CD4-positive, alpha-beta memory T cell (primary cell): ENCODE measurements at regions of chr17 and their contacts with region 1.

Region 1: GRCh38 chr17:76408052-76408849 is 23.8 kb downstream of the SPHK1 start:
- DNase-seq: peak; percentile 60 to 68 (median 66)
- H3K4me3 ChIP-seq: no peak overlapping the region
- H3K4me3 Mint-ChIP-seq: no peak overlapping the region
- H3K27ac ChIP-seq: no peak overlapping the region
- H3K27ac Mint-ChIP-seq: peak overlapping the region; percentile 6 to 74 (median 59)
- H3K4me1 ChIP-seq: no peaks in the 10 kb centered on the region
- H3K4me1 Mint-ChIP-seq: peaks cover 4 to 14% (median 9%) of the 10 kb centered on the region in 4 donors
- H3K27me3 ChIP-seq: no peaks in the 10 kb centered on the region
- H3K27me3 Mint-ChIP-seq: no peaks in the 10 kb centered on the region

Region 2: DNA sequence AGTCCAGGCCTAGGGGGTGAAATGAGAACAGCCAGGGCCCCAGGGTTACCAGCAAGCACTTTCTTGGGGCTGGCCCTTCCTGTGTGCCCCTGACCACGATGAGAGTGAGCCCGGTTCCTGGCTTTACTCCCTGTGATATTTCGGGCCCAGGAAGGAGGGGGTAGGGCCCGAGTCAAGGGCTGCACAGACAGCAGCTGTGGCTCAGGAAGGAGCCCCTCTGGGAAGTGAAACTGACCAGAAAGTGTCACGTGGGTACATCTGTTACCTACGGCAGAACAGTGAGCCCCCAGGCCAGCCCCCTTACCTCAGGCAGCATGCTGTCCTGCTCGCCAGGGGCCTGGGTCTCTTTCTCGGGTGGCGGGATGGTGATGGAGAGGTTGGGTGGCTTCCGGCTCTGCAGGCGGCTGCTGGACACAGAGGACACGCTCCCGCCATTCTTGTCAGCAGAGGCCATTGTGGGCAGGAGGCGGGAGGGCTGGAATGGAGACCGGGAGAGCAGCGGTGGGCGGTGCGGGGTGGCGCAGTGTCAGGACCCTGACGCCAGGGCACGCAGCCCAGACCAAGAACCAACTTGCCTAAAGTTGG is 72.9 kb after region 1 on chr17:
- CTCF ChIA-PET with region 1: no interaction called
- POLR2A ChIA-PET with region 1: no interaction called
- intact Hi-C with region 1: no loop called
- DNase-seq: peak in 1 of 5 donors; percentile 22
- H3K4me3 ChIP-seq: no peak overlapping the region
- H3K4me3 Mint-ChIP-seq: no peak overlapping the region
- H3K27ac ChIP-seq: no peak overlapping the region
- H3K27ac Mint-ChIP-seq: no peak overlapping the region
- H3K4me1 ChIP-seq: no peaks in the 10 kb centered on the region
- H3K4me1 Mint-ChIP-seq: peaks cover 0 to 4% (median 1%) of the 10 kb centered on the region in 4 donors
- H3K27me3 ChIP-seq: no peaks in the 10 kb centered on the region
- H3K27me3 Mint-ChIP-seq: no peaks in the 10 kb centered on the region

Region 3: GRCh38 chr17:76501018-76501826 is 93.0 kb after region 1 on chr17 and contains the start of gene RHBDF2:
- CTCF ChIA-PET with region 1: interaction called, 91 read pairs
- POLR2A ChIA-PET with region 1: interaction called, 3 read pairs
- intact Hi-C with region 1: no loop called
- DNase-seq: peak; percentile 92 to 98 (median 95)
- H3K4me3 ChIP-seq: peak within 1 kb of the TSS; percentile 61 to 83
- H3K4me3 Mint-ChIP-seq: peak within 1 kb of the TSS; percentile 86 to 91 (median 89)
- H3K27ac ChIP-seq: peak within 1 kb of the TSS; percentile 69
- H3K27ac Mint-ChIP-seq: peak within 1 kb of the TSS; percentile 85 to 100 (median 98)
- H3K4me1 ChIP-seq: peaks cover 41% of the 10 kb centered on the region
- H3K4me1 Mint-ChIP-seq: peaks cover 15 to 56% (median 40%) of the 10 kb centered on the region in 4 donors
- H3K27me3 ChIP-seq: no peaks in the 10 kb centered on the region
- H3K27me3 Mint-ChIP-seq: no peaks in the 10 kb centered on the region
- total RNA-seq, gene RHBDF2: 50.0 to 62.2 TPM

Region 4: DNA sequence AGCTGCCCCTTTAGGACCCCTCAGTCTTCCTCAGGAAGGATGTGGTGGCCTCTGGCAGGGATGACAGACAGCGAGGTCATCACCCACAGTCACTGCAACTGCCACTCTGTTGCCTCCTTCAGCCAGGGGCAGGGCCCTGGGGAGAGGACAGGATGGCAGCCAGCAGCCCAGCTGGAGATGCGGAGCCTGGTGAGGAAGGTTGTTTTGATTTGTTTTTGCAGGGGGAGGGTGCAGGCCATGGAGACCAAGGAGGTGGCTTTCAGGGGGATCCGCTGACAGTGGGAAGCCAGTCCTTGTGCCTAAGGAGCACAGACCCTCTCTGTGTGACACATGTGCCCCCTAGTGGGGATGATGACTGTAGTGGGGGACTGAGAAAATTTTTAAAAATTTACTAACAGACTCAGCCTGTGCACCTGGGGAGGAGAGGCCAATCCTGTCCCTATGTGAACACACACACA is 139.0 kb after region 1 on chr17:
- CTCF ChIA-PET with region 1: interaction called, 8 read pairs
- POLR2A ChIA-PET with region 1: no interaction called
- intact Hi-C with region 1: loop called (anchors 1 kb)
- DNase-seq: peak; percentile 37 to 62 (median 59)
- H3K4me3 ChIP-seq: no peak overlapping the region
- H3K4me3 Mint-ChIP-seq: no peak overlapping the region
- H3K27ac ChIP-seq: no peak overlapping the region
- H3K27ac Mint-ChIP-seq: peak overlapping the region in 1 of 7 donors; percentile 38
- H3K4me1 ChIP-seq: peaks cover 7% of the 10 kb centered on the region
- H3K4me1 Mint-ChIP-seq: peaks cover 0 to 2% (median 0%) of the 10 kb centered on the region in 4 donors
- H3K27me3 ChIP-seq: no peaks in the 10 kb centered on the region
- H3K27me3 Mint-ChIP-seq: peaks cover 6% of the 10 kb centered on the region in 2 donors